ENCODE measurements at regions of chr15 and their contacts with region 1.

Region 1: GRCh38 chr15:74873036-74873755 is at the start of gene SCAMP2:
- DNase-seq: peak; percentile 79 to 95 (median 86)
- ATAC-seq: peak; percentile 90
- H3K4me3 ChIP-seq: peak within 1 kb of the TSS; percentile 65
- H3K4me3 Mint-ChIP-seq: peak within 1 kb of the TSS; percentile 94
- H3K27ac ChIP-seq: peak within 1 kb of the TSS; percentile 93 to 94
- H3K27ac Mint-ChIP-seq: peak within 1 kb of the TSS; percentile 90
- H3K4me1 ChIP-seq: peaks cover 50% of the 10 kb centered on the region
- H3K4me1 Mint-ChIP-seq: peaks cover 45% of the 10 kb centered on the region
- H3K27me3 ChIP-seq: no peaks in the 10 kb centered on the region
- H3K27me3 Mint-ChIP-seq: no peaks in the 10 kb centered on the region
- CTCF ChIP-seq: no peak
- total RNA-seq, gene SCAMP2: 56.1 to 56.9 TPM

Region 2: GRCh38 chr15:74460871-74461846 is 412.0 kb before region 1 on chr15 and contains the start of gene UBL7:
- CTCF ChIA-PET with region 1: no interaction called
- POLR2A ChIA-PET with region 1: no interaction called
- intact Hi-C with region 1: no loop called
- DNase-seq: peak; percentile 91 to 97 (median 96)
- ATAC-seq: peak; percentile 98
- H3K4me3 ChIP-seq: peak within 1 kb of the TSS; percentile 92
- H3K4me3 Mint-ChIP-seq: peak within 1 kb of the TSS; percentile 97
- H3K27ac ChIP-seq: peak within 1 kb of the TSS; percentile 61 to 62
- H3K27ac Mint-ChIP-seq: peak within 1 kb of the TSS; percentile 84
- H3K4me1 ChIP-seq: peaks cover 19% of the 10 kb centered on the region
- H3K4me1 Mint-ChIP-seq: peaks cover 53% of the 10 kb centered on the region
- H3K27me3 ChIP-seq: no peaks in the 10 kb centered on the region
- H3K27me3 Mint-ChIP-seq: no peaks in the 10 kb centered on the region
- CTCF ChIP-seq: peak; percentile 15
- total RNA-seq, gene UBL7: 14.3 to 17.1 TPM

Region 3: DNA sequence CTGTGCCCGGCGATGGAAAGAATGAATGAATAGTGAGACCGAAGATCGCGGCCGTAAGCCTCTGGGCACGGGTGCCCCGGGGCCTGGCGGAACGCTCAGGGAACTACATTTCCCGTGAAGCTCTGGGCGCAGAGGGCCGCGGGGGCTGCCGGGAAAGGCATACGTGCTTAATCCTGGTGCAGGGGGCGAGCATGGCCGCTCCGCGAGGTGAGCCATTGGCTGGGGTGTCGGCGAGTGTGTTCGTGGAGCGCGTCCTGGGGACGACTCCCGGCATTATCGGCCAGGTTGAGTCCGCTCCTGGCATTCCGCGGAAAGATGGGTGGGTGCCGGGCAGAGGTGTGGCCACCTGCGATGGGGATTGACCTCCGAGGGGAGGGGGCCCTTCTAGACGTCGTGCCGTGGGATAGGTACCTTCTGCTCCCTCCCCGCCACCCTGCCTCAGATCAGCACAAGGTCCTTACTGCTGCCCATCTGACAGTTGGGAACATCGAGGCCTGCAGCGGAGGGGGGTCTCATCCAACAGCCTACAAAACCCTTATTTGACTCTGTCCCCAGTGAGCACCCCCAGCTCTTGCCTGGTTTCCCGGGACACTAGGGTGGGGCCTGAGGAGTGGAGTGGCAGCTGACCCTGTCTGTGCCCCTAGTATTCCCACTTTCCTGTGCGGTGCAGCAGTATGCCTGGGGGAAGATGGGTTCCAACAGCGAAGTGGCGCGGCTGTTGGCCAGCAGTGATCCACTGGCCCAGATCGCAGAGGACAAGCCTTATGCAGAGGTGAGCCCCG is 16.9 kb after region 1 on chr15 and contains the start of gene MPI:
- CTCF ChIA-PET with region 1: interaction called, 6 read pairs
- POLR2A ChIA-PET with region 1: interaction called, 12 read pairs
- intact Hi-C with region 1: loop called (anchors 1 kb)
- DNase-seq: peak; percentile 70 to 90 (median 78)
- ATAC-seq: peak; percentile 92
- H3K4me3 ChIP-seq: peak within 1 kb of the TSS; percentile 92
- H3K4me3 Mint-ChIP-seq: peak within 1 kb of the TSS; percentile 88
- H3K27ac ChIP-seq: peak within 1 kb of the TSS; percentile 71 to 89
- H3K27ac Mint-ChIP-seq: peak within 1 kb of the TSS; percentile 86
- H3K4me1 ChIP-seq: peaks cover 56% of the 10 kb centered on the region
- H3K4me1 Mint-ChIP-seq: peaks cover 43% of the 10 kb centered on the region
- H3K27me3 ChIP-seq: no peaks in the 10 kb centered on the region
- H3K27me3 Mint-ChIP-seq: no peaks in the 10 kb centered on the region
- CTCF ChIP-seq: no peak
- total RNA-seq, gene MPI: 28.9 to 30.3 TPM